ENCODE measurements at regions of chr2 and their contacts with region 1.

Region 1: DNA sequence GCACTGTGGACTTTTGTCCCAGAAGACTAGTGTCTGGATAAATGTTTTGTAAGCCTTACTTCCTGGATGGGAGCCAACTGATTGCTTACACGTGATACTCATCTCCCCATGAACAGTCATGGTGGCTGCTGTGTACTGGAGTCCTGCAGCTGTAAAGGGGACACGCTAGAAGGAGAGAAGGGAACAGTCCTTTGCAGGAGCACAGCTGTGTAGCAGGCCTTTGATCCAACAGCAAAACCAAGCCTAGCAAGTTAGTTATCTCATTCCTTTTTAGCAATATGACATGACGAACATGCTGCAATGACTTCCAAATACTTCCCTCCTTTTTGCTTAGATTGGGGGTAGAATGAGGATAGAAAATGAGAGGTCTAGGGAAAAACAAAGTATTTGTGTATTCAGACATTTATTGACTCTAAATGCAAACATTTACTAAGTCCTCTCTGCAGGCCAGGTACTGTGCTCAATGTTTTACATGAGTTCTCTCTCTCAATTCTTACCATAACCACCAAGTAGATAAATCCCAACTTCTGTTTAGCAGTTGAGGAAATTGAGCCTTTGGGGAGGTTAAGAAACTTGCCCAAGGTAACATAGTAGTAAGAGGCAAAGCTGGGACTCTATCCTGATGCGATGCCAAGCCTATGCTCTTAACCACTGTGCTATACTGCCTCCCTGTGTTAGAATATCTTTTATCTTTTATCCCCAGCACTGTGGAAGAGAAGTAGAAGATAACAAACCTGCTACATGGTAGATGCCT is 55.4 kb upstream of the CD28 start:
- DNase-seq: peak; percentile 67
- H3K4me3 ChIP-seq: no peak overlapping the region
- H3K27ac ChIP-seq: peak overlapping the region; percentile 35 to 76 (median 74)
- H3K4me1 ChIP-seq: peaks cover 0 to 40% (median 31%) of the 10 kb centered on the region in 4 donors
- H3K27me3 ChIP-seq: no peaks in the 10 kb centered on the region
- CTCF ChIP-seq: peak in 3 of 4 experiments; percentile 22 to 39 (median 37)
- EP300 ChIP-seq: no peak
- POLR2A ChIP-seq: no peak

Region 2: GRCh38 chr2:203112342-203112741 is 538.7 kb before region 1 on chr2:
- intact Hi-C with region 1: no loop called
- DNase-seq: no peak
- H3K4me3 ChIP-seq: no peak overlapping the region
- H3K27ac ChIP-seq: no peak overlapping the region
- H3K4me1 ChIP-seq: no peaks in the 10 kb centered on the region
- H3K27me3 ChIP-seq: no peaks in the 10 kb centered on the region
- CTCF ChIP-seq: no peak
- EP300 ChIP-seq: no peak
- POLR2A ChIP-seq: no peak

Region 3: DNA sequence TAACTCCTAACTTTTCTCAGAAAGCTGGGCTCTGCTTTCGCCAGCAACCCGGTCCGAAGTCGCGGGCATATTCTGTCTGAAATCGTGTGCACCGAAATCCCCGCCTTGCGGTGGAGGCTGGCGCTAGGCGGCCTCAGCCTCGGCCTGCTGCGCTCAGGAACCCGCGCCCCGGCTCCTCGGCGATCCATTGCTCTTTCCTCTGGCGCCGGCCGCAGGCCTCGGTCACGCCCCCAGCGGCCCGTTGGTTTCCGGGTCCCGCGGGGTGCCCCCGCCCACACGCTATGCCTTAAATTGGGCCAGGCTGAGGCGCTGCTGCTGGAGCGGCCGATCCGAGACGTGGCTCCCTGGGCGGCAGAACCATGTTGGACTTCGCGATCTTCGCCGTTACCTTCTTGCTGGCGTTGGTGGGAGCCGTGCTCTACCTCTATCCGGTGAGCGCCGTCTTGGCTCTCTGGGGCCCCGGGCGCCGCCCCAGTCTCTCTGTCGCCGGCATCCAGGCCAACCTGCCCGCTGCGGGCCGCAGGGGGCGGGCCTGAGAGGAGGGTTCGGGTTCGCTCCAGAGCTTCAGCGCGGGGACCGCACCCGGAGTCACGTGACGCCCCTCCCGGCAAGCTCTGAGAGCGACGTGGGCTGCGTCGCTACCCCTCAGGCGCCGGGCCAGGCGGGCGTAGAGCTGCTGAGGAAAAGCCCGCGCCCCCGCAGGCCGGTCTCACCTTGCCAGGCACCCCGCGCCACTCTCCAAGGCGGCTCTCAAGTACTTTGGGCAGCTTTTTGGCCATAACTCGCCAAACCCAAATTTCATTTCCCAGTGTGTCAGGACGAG is 412.1 kb before region 1 on chr2 and contains the start of gene CYP20A1:
- intact Hi-C with region 1: loop called (anchors 10 kb)
- DNase-seq: peak; percentile 98
- H3K4me3 ChIP-seq: peak within 1 kb of the TSS; percentile 49 to 74 (median 68)
- H3K27ac ChIP-seq: peak within 1 kb of the TSS; percentile 91 to 95 (median 92)
- H3K4me1 ChIP-seq: peaks cover 0 to 25% (median 24%) of the 10 kb centered on the region in 4 donors
- H3K27me3 ChIP-seq: no peaks in the 10 kb centered on the region
- CTCF ChIP-seq: peak in 3 of 4 experiments; percentile 19 to 42 (median 40)
- EP300 ChIP-seq: peak in 2 of 4 donors; percentile 36 to 49
- POLR2A ChIP-seq: peak; percentile 63 to 72
- total RNA-seq, gene CYP20A1: 22.7 to 35.4 (median 28.2) TPM

Region 4: GRCh38 chr2:203484266-203485112 is 166.5 kb before region 1 on chr2:
- intact Hi-C with region 1: loop called (anchors 5 kb)
- DNase-seq: no peak
- H3K4me3 ChIP-seq: no peak overlapping the region
- H3K27ac ChIP-seq: no peak overlapping the region
- H3K4me1 ChIP-seq: no peaks in the 10 kb centered on the region
- H3K27me3 ChIP-seq: no peaks in the 10 kb centered on the region
- CTCF ChIP-seq: peak; percentile 53 to 55 (median 53)
- EP300 ChIP-seq: no peak
- POLR2A ChIP-seq: no peak

Region 5: DNA sequence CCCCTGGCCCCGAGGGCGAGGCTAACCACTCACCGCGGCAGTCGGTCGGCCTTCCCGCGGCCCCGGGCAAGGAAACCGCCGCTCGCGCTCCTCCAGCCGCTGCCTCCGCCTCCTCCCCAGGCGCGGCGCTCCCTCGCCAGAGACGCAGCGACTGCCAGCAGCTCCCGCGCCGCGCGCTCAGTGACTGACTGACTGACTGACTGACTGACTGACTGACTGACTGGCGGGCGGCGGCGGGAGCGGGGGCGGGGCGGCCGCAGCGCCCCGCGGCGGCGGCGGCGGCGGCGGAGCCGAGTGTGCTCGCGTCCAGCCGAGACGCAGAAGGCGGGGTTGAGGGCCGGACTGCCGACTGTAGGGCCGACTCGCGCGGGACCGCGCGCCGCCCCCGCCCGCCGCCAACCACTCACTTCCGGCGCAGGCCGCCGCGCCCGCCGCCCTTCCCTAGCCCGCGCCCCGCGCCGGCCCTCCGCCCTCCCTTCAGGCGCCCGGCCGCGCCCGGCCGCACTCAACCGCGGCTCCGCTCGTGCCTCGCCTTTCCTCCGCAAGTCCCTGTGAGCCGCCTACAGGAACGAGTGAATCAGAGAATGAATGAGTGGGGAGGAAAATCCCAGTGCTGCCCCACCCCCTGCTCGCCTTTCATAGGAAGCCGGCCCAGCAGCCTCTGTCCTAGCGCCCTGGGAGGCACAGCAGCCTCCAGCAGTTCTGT is 115.8 kb before region 1 on chr2 and contains the start of gene RAPH1:
- intact Hi-C with region 1: loop called (anchors 1 kb)
- DNase-seq: peak; percentile 91
- H3K4me3 ChIP-seq: peak within 1 kb of the TSS; percentile 76 to 94 (median 88)
- H3K27ac ChIP-seq: peak within 1 kb of the TSS; percentile 88 to 97 (median 93)
- H3K4me1 ChIP-seq: peaks cover 0 to 28% (median 19%) of the 10 kb centered on the region in 4 donors
- H3K27me3 ChIP-seq: no peaks in the 10 kb centered on the region
- CTCF ChIP-seq: no peak
- EP300 ChIP-seq: no peak
- POLR2A ChIP-seq: peak in 1 of 2 donors; percentile 50
- total RNA-seq, gene RAPH1: 11.8 to 19.9 (median 14.4) TPM

Region 6: GRCh38 chr2:203583701-203584100 is 67.3 kb before region 1 on chr2:
- intact Hi-C with region 1: loop called (anchors 5 kb)
- DNase-seq: no peak
- H3K4me3 ChIP-seq: no peak overlapping the region
- H3K27ac ChIP-seq: peak overlapping the region in 1 of 4 donors; percentile 74
- H3K4me1 ChIP-seq: peaks cover 0 to 31% (median 27%) of the 10 kb centered on the region in 4 donors
- H3K27me3 ChIP-seq: no peaks in the 10 kb centered on the region
- CTCF ChIP-seq: no peak
- EP300 ChIP-seq: no peak
- POLR2A ChIP-seq: no peak

Region 7: GRCh38 chr2:203814661-203815540 is 163.9 kb after region 1 on chr2:
- intact Hi-C with region 1: loop called (anchors 10 kb)
- DNase-seq: peak; percentile 72
- H3K4me3 ChIP-seq: no peak overlapping the region
- H3K27ac ChIP-seq: peak overlapping the region in 1 of 4 donors; percentile 7
- H3K4me1 ChIP-seq: peaks cover 0 to 12% (median 5%) of the 10 kb centered on the region in 4 donors
- H3K27me3 ChIP-seq: no peaks in the 10 kb centered on the region
- CTCF ChIP-seq: peak; percentile 18 to 67 (median 64)
- EP300 ChIP-seq: no peak
- POLR2A ChIP-seq: no peak

Region 8: DNA sequence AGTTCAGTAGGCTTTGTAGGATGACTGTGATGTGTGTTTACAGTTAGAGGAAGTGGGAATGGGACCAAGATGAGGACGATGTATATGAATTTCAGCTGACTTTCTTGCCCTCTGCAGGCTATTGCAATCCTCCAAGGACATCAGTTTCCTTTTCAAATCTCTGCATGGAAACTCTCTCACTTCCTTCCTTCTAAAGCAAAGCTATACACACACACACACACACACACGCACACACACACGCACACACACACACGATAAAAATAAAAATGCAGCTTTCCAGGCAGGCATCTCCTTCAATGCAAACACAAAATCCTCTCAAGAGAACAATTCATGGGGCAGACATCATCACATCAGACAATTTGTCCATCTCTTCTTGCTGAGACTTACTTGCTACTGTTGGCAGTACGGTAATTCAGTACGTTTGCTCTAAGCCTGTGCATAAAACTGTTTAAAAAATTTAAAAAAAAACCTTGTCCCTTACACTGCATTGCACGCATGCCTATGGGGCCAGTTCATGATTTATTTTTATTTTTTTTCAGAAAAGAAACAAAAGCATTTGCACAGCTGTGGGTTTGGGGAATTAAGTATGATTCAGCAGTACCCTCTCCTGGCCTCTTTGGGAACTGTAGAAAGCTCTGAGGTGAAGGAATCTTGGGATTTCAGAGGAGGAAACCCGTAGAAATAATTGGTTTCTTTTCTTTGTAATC is 258.4 kb after region 1 on chr2:
- intact Hi-C with region 1: loop called (anchors 10 kb)
- DNase-seq: no peak
- H3K4me3 ChIP-seq: peak overlapping the region in 3 of 4 donors; percentile 13 to 31 (median 22)
- H3K27ac ChIP-seq: peak overlapping the region; percentile 21 to 60 (median 36)
- H3K4me1 ChIP-seq: peaks cover 0 to 18% (median 15%) of the 10 kb centered on the region in 4 donors
- H3K27me3 ChIP-seq: no peaks in the 10 kb centered on the region
- CTCF ChIP-seq: peak; percentile 61 to 80 (median 65)
- EP300 ChIP-seq: no peak
- POLR2A ChIP-seq: no peak